GM10248 (cell line): ENCODE measurements at regions of chr15 and their contacts with region 1.

Region 1: GRCh38 chr15:64046347-64047153 is at the start of gene DAPK2:
- DNase-seq: peak; percentile 93
- CTCF ChIP-seq: peak; percentile 76

Region 2: GRCh38 chr15:63752075-63752684 is 294.4 kb before region 1 on chr15:
- CTCF ChIA-PET with region 1: interaction called, 52 read pairs
- POLR2A ChIA-PET with region 1: no interaction called
- DNase-seq: peak; percentile 55
- CTCF ChIP-seq: peak; percentile 60

Region 3: DNA sequence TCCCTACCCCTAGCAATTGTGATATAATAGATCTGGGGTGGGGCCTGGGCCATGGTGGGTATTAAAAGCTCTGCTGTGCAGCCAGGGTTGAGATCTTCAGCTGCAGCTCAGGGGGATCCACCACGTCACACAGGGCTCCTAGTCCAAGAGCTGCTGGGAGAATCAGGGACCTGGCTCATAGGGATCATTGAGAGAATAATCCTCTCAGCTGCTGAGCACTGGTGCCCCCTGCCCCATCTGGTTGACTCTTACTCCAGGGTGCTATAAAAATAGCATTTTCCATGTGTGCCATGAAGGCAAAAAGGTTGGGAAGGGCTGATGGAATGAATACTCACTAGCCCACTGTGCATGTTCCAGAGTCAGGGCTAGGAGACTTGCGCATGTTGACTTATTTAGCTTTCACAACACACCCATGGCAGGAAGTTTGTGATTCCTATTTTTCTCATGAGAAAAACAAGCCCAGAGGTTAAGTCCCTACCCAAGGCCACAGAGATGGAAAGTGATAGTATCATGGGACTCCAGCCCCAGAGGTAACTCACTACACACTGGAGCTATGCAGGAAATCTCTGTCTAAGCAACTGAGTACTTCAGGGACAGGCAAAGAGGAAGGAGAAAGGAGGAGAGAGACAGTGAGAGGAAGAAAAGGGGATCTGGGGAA is 118.2 kb before region 1 on chr15:
- CTCF ChIA-PET with region 1: interaction called, 18 read pairs
- POLR2A ChIA-PET with region 1: interaction called, 7 read pairs
- DNase-seq: no peak
- CTCF ChIP-seq: no peak

Region 4: DNA sequence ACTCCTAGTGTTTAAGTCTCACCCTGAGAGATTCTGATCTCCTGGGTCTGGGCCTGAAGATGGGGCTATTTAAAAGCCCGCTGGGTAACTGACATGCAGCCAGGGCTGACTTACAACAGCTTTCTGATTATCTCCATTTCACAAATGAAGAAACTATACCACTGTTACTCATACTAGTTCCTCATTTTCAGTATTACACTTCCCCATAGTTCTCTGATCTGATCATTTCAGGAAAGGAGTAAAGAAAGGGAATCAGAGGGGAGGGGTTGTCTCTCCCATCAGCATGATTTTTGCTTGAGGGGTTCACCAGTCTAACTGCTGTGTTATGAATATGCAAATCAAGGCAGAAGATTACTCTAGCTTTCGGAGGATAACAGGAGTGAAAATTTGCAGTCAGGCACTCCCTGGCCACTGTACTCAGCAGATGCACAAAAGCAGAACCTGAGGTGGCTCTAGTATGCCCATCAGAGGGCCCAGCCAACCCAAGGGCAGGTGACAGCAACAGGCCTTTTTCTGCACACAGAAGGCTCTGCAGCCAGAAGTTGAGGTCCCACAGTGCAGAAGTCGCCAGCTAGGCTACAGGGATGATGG is 59.7 kb before region 1 on chr15:
- CTCF ChIA-PET with region 1: interaction called, 18 read pairs
- POLR2A ChIA-PET with region 1: no interaction called
- DNase-seq: peak; percentile 67
- CTCF ChIP-seq: no peak

Region 5: GRCh38 chr15:64010719-64011118 is 35.8 kb before region 1 on chr15:
- CTCF ChIA-PET with region 1: interaction called, 30 read pairs
- POLR2A ChIA-PET with region 1: no interaction called
- DNase-seq: peak; percentile 79
- CTCF ChIP-seq: peak; percentile 40

Region 6: GRCh38 chr15:64029110-64029509 is 17.4 kb before region 1 on chr15:
- CTCF ChIA-PET with region 1: interaction called, 24 read pairs
- POLR2A ChIA-PET with region 1: no interaction called
- DNase-seq: no peak
- CTCF ChIP-seq: no peak

Region 7: GRCh38 chr15:64067564-64068030 is 21.0 kb after region 1 on chr15:
- CTCF ChIA-PET with region 1: interaction called, 39 read pairs
- POLR2A ChIA-PET with region 1: no interaction called
- DNase-seq: peak; percentile 78
- CTCF ChIP-seq: peak; percentile 70